HEK293T (cell line): ENCODE measurements at regions of chr22 and their contacts with region 1.

Region 1: DNA sequence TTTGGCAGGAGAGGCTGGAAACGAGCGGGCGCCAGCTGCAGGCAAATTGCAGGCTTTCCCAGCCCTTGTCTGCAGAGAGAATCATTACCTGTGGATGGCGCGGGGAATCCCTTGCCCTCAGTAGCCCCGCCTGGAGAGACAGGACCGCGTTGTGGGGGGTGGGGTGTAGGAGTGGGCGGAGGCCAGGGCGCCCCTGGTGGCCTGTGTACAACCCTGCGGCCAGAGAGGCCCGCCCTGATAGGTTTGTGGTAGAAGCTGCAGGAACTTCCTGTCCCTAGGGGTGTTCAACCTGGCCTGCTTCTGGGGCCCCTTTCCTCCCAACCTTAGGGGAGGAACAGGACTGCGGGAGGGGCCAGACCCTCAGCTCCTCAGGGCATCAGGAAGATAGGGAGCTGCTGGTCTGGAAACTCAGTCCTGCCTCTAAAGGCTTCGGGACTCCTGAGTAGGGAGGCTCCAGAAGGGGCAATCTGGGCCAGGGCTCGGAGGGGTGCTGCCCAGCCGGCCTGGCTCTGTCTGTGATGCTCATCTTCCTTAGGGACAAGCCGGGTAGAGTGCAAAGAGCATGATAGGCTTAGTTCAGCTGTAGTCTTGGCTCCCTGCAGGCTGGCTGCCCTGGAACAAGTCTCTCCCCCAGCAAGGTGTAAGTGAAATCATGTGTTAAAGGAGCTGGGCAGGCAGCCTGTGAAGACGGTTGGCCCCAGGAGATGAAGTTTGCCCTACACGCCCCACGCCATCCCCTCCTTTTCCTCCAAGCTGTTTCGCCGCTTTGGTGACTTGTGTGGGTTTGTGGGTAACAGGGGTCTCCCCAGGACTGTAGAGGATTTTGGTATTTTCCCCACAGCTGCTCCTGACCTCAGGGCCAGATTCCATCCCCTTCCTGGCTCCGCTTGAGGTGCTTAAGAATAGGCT is 24.1 kb upstream of the SUSD2 start:
- DNase-seq: peak; percentile 91

Region 2: GRCh38 chr22:24146194-24146616 is 11.0 kb before region 1 on chr22:
- CTCF ChIA-PET with region 1: interaction called, 19 read pairs
- POLR2A ChIA-PET with region 1: no interaction called
- DNase-seq: no peak

Region 3: DNA sequence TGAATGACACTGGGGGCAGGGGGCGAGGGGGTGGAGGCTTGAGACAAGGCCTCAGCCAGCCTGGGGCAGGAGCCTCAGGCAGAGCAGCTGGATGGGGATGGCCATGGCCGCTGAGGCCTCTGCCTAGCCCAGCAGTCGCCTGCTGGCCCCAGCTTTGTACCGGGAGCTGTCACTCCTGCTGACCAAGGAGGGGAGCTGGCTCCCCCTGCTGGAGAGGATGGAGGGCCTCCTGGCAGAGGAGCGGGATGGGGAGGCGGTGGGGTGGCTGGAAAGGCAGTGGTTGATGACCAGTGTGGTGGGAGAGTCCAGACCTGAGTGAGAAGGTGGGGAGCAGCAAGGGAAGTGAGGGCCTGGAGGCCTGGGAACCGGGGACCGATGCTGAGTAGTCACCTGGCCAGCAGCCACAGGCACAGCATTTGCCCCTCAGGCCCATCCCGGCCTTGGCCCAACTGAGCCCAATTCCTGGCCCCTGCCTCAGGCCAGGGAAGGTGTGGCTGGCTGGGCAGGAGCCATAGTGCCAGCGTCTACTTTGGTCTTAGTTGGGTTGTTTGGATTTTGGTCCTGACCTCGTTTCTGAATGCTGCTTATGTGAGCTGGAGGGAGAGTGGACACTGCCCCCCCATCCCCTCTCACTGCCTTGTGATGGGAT is 18.1 kb after region 1 on chr22:
- CTCF ChIA-PET with region 1: interaction called, 16 read pairs
- POLR2A ChIA-PET with region 1: no interaction called
- DNase-seq: peak; percentile 87

Region 4: DNA sequence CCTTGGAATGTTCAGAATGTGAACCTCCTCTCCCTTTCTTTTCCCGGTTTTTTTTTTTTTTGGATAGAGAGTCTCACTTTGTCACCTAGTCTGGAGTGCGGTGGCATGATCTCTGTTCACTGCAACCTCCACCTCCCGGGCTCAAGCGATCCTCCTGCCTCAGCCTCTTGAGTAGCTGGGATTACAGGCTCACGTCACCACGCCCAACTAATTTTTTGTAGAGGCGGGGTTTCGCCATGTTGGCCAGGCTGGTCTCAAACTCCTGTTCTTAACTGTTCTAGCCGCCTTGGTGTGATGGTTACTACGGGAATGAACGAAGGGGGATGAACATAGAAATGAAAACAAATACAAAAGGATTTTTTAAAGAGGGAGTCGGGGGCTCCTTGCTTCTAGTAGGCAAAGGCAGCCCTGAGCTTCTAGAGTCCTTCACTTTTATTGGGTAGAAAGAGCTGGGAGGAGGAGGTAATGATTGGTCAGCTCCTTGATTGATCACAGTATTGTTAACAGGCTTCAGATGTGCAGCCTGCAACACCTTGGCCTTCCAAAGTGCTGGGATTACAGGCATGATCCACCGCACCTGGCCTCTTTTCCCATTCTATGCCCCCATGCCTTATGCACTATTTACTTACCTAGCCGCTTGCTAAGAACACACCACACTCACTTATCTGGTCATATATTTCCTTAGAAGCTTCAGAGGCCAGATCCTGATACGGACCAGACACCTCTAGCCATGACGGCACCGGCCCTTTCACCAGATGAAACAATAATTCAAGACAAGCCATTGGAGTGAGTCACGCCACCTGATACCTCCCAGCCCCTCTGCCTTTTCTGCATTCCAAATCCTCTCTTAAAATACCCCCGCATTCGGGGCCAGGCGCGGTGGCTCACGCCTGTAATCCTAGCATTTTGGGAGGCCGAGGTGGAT is 44.8 kb after region 1 on chr22:
- CTCF ChIA-PET with region 1: no interaction called
- POLR2A ChIA-PET with region 1: no interaction called
- DNase-seq: no peak